T-cell (primary cell): ENCODE measurements at regions of chr18 and their contacts with region 1.

Region 1: DNA sequence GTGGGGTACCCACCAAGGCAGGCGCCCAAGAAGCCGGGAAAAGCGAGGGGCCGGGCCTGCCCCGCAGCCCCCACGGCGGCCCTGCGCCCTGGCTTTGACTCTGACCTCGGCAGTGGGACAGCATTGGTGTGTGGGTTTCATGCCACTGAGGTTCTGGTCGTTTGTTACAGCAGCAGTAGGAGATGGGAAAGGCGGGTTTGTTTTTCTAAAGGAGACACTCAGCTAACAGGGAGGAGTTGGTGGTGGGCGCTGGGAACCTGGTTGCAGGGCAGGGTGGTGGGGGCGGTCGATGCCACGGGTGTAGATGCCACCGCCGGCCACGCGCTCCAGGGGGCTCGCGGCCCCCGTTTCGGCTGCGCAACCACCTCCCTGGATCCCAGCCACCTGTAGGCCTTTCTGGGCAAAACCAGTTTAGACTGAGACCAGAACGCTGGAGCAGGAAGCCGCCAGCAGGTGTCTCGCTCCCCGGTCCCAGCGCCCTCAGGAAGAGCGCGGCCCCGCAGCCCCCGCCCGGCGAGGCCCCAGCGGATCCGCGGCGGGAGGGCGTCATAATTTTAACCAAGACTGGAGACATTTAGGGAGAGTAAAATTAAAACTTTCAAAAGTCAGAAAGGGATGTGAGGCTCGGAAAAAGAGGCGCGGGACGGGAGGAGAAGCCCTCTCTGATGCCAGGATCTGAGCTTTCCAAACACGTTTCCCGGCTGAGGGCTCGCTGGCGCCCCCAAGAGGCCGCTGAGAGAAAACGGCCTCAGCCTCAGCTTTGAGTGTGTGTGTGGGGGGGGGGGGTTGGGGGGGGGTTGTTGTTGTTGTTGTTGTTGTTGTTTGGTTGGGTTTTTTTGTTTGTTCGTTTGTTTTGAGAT is 17.4 kb downstream of the CIDEA start:
- DNase-seq: peak in 26 of 35 experiments; percentile 2 to 66 (median 22)
- ATAC-seq: peak; percentile 56 to 82 (median 65)
- H3K4me3 ChIP-seq: peak overlapping the region; percentile 15 to 55
- H3K4me3 Mint-ChIP-seq: peak overlapping the region in 2 of 3 donors; percentile 53 to 57
- H3K27ac ChIP-seq: no peak overlapping the region
- H3K27ac Mint-ChIP-seq: no peak overlapping the region
- H3K4me1 ChIP-seq: peaks cover 0 to 3% of the 10 kb centered on the region in 2 experiments
- H3K4me1 Mint-ChIP-seq: peaks cover 0 to 5% (median 0%) of the 10 kb centered on the region in 3 donors
- H3K27me3 ChIP-seq: peaks cover 0 to 47% of the 10 kb centered on the region in 2 experiments
- H3K27me3 Mint-ChIP-seq: peaks cover 14 to 15% of the 10 kb centered on the region in 2 donors

Region 2: GRCh38 chr18:12287684-12288402 is 16.2 kb after region 1 on chr18:
- CTCF ChIA-PET with region 1: no interaction called
- POLR2A ChIA-PET with region 1: interaction called in 1 of 2 experiments, 10 read pairs
- DNase-seq: no peak
- ATAC-seq: no peak
- H3K4me3 ChIP-seq: no peak overlapping the region
- H3K4me3 Mint-ChIP-seq: no peak overlapping the region
- H3K27ac ChIP-seq: no peak overlapping the region
- H3K27ac Mint-ChIP-seq: no peak overlapping the region
- H3K4me1 ChIP-seq: peaks cover 0 to 5% of the 10 kb centered on the region in 2 experiments
- H3K4me1 Mint-ChIP-seq: peaks cover 0 to 7% (median 6%) of the 10 kb centered on the region in 3 donors
- H3K27me3 ChIP-seq: peaks cover 10 to 51% of the 10 kb centered on the region in 2 experiments
- H3K27me3 Mint-ChIP-seq: peaks cover 19 to 59% of the 10 kb centered on the region in 2 donors

Region 3: GRCh38 chr18:12397793-12398192 is 126.2 kb after region 1 on chr18:
- CTCF ChIA-PET with region 1: no interaction called
- POLR2A ChIA-PET with region 1: interaction called in 1 of 2 experiments, 10 read pairs
- DNase-seq: no peak
- ATAC-seq: no peak
- H3K4me3 ChIP-seq: no peak overlapping the region
- H3K4me3 Mint-ChIP-seq: no peak overlapping the region
- H3K27ac ChIP-seq: no peak overlapping the region
- H3K27ac Mint-ChIP-seq: no peak overlapping the region
- H3K4me1 ChIP-seq: no peaks in the 10 kb centered on the region
- H3K4me1 Mint-ChIP-seq: no peaks in the 10 kb centered on the region
- H3K27me3 ChIP-seq: peaks cover 0 to 66% of the 10 kb centered on the region in 2 experiments
- H3K27me3 Mint-ChIP-seq: peaks cover 32 to 44% of the 10 kb centered on the region in 2 donors